ENCODE measurements at regions of chr19 and their contacts with region 1.

Region 1: GRCh38 chr19:48965040-48965805 is at the start of gene FTL:
- DNase-seq: peak; percentile 93
- H3K4me3 ChIP-seq: peak within 1 kb of the TSS; percentile 100
- H3K27ac ChIP-seq: peak within 1 kb of the TSS; percentile 98
- H3K27me3 ChIP-seq: no peaks in the 10 kb centered on the region
- CTCF ChIP-seq: no peak
- polyA plus RNA-seq, gene FTL: 3,644 and 5,326 TPM in 2 replicates

Region 2: DNA sequence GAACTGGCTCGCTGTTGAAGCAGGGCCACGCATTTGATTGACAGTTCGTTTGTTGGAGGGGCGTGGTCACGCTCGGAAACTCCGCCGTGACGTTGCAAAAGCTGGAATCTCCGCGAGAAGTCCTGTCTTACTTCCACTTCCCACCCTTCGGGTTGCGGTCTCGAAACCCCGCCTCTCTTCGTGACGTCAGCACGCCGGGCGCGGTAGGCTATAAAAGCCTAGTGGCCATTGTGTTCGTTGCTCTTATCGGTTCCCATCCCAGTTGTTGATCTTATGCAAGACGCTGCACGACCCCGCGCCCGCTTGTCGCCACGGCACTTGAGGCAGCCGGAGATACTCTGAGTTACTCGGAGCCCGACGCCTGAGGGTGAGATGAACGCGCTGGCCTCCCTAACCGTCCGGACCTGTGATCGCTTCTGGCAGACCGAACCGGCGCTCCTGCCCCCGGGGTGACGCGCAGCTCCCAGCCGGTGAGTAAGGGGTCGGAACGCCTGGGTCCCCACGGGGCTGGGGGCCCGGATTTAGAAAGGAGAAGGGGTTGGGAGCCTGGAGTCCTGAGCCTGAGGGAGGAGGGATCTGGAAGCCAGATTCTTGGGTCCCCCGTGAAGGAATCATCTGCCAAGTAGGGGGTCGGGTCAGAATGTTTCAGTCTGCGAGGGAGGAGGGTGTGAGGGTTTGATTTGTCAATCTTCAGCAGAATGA is 92.9 kb before region 1 on chr19 and contains the start of gene PPP1R15A:
- CTCF ChIA-PET with region 1: interaction called, 4 read pairs
- POLR2A ChIA-PET with region 1: interaction called, 83 read pairs
- DNase-seq: peak; percentile 96
- H3K4me3 ChIP-seq: peak within 1 kb of the TSS; percentile 99
- H3K27ac ChIP-seq: peak within 1 kb of the TSS; percentile 100
- H3K27me3 ChIP-seq: no peaks in the 10 kb centered on the region
- CTCF ChIP-seq: no peak
- polyA plus RNA-seq, gene PPP1R15A: 36.5 and 37.2 TPM in 2 replicates

Region 3: DNA sequence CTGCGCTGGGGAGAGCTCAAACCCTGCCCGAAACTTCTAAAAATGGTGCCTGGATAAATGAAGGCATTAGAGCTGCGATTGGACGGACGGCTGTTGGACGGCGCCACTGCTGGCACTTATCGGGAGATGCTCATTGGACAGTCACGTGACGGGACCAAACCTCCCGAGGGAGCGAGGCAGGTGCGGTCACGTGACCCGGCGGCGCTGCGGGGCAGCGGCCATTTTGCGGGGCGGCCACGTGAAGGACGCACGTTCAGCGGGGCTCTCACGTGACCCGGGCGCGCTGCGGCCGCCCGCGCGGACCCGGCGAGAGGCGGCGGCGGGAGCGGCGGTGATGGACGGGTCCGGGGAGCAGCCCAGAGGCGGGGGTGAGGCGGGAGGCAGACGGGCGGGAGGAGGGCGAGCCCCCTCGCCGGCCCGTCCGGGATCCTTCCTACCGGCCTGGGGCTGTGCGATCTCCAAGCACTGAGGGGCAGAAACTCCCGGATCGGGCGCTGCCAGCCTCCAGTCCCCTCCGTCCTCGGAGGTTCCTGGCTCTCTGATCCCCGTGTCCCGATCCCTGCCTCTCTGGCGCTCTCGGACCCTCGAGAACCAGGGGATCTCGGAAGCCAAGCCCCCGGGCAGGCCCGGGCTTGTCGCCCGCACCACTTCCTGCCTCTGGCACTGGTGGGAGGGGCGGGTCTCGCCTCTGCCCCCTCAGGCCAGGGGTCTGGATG is 10.5 kb before region 1 on chr19 and contains the start of gene BAX:
- CTCF ChIA-PET with region 1: interaction called, 4 read pairs
- POLR2A ChIA-PET with region 1: interaction called, 33 read pairs
- DNase-seq: peak; percentile 87
- H3K4me3 ChIP-seq: peak within 1 kb of the TSS; percentile 94
- H3K27ac ChIP-seq: peak within 1 kb of the TSS; percentile 95
- H3K27me3 ChIP-seq: no peaks in the 10 kb centered on the region
- CTCF ChIP-seq: 0 out of 2 replicates have a peak, but pooled peaks have one; percentile 3
- polyA plus RNA-seq, gene BAX: 110 and 147 TPM in 2 replicates

Region 4: DNA sequence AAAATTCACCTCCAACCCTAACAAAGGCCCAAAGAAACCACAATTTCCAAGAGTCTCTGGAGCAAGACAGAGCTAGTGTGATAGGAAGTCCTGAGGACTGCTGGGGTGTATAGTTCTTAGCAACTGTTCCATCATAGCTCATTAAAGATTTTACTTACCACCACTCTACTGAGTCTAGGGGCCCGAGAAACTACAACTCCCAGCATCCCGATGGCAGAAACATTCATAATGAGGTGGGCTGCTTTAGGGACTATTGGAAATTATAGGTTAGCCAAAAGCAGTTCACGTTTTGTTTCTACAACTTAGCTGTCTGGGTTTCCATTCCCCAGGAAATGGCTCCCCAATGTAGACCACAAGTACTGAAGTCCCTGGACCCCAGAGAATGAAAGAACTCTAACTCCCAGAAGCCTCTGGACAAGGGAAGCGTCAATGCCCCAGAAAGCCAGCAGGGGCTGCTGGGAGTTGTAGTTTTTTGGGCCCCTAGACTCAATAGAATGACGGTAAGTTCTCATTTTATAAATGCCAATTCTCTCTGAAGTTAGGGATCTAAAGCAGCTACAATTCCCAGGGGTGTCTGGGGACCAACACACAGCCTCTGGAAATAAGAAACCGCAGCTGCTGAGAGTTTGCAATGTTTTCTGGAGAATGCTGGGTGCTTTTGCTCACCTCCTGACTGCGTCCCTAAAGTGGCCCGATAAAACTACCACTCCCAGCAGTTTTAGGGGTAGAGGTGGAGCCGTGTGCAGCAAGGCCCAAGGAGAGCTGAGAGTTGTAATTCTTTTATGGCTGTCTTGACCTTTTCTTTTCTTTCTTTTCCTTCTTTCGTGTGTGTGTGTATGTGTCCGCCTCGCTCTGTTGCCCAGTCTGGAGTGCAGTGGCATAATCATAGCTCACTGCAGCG is 11.0 kb after region 1 on chr19:
- CTCF ChIA-PET with region 1: interaction called, 20 read pairs
- POLR2A ChIA-PET with region 1: interaction called, 11 read pairs
- DNase-seq: no peak
- H3K4me3 ChIP-seq: no peak overlapping the region
- H3K27ac ChIP-seq: no peak overlapping the region
- H3K27me3 ChIP-seq: no peaks in the 10 kb centered on the region
- CTCF ChIP-seq: no peak

Region 5: DNA sequence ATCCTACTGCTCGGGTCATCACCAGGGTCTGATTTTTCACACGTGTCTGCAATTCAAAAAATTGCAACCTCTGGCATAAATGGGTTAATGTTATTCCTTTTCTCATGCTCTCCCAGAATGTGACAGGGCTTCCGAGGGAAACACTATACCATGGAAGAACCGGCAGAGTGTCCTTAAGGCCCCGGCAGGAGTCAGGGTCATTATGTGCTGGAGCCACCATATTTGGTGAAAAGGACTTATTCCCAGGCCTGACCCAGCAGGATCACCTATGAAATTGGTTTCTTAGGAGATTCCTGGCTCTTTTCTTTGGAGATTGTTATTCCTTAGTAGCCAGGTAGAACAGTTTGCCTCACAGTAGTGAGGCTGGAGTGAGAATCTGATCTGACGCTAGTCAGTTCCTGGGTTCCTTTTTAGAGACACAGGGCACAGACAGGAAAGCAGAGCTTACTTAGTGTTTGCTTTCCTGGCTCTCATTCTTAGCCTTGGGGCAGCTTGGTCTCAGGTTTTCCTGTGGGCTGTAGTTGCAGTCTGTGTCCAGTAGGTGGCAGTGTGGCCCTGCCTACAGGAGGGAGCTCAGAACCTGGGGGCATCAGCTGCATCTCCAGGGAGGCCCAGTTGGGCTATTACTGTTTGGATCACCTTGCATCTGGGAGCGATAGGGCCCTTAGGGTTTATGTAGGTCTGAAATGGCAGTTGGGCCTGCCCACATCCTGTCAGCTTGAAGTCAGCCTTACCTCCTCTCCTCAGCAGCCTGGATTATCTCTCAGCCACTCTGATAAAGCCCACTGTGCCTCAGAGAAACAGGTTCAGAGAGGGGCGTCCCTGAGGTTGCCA is 132.4 kb after region 1 on chr19:
- CTCF ChIA-PET with region 1: no interaction called
- POLR2A ChIA-PET with region 1: no interaction called
- DNase-seq: peak; percentile 53
- H3K4me3 ChIP-seq: no peak overlapping the region
- H3K27ac ChIP-seq: no peak overlapping the region
- H3K27me3 ChIP-seq: no peaks in the 10 kb centered on the region
- CTCF ChIP-seq: peak; percentile 99